GM10248 (cell line): ENCODE measurements at regions of chr13 and their contacts with region 1.

Region 1: GRCh38 chr13:99436686-99437416 is 64.4 kb upstream of the TM9SF2 start:
- DNase-seq: peak; percentile 83
- CTCF ChIP-seq: peak; percentile 100

Region 2: GRCh38 chr13:99288089-99288488 is 148.8 kb before region 1 on chr13:
- CTCF ChIA-PET with region 1: interaction called, 363 read pairs
- POLR2A ChIA-PET with region 1: no interaction called
- DNase-seq: peak; percentile 66
- CTCF ChIP-seq: no peak

Region 3: GRCh38 chr13:99347911-99348451 is 88.9 kb before region 1 on chr13:
- CTCF ChIA-PET with region 1: interaction called, 12 read pairs
- POLR2A ChIA-PET with region 1: no interaction called
- DNase-seq: no peak
- CTCF ChIP-seq: no peak

Region 4: DNA sequence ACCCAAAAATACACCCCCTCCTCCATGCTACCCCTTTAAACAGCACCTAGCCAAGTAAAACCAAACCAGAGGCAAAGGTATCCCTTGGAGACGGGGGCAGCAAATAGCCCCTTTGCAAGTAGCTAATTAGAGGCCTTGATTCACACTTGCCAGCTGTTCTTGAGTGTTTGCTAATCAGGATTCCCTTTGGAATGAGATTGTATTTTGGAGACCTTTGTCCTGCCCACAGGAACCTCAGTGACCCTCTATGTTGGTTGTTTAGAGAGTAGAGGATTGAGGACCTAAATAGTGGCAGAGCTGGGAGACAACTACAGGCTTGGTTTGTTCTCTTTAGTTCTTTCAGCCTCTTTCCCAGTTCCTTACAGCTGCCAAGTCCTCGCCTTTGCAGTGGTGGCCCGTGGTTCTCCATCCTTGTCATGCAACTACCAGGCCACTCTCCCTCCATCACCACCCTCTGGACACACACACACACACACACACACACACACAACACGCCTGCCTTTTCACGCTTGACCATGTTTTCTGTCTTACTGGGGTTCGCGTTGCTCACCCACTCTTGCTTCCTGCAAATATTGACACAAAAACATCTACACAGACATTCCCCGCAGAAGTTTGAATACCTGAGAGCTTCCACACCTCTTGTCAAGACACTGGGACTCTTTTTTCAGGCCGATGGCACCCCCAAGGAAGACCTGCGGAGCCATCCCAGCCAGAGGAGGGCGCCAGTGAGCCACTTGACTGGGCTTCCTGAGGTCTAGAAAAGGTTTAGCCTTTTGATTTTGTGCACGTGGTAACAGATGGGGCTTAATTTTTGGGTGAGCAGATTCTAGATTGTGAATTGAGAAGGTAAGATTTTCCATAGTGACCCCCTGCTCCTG is 49.7 kb before region 1 on chr13:
- CTCF ChIA-PET with region 1: interaction called, 450 read pairs
- POLR2A ChIA-PET with region 1: interaction called, 3 read pairs
- DNase-seq: peak; percentile 84
- CTCF ChIP-seq: peak; percentile 93

Region 5: DNA sequence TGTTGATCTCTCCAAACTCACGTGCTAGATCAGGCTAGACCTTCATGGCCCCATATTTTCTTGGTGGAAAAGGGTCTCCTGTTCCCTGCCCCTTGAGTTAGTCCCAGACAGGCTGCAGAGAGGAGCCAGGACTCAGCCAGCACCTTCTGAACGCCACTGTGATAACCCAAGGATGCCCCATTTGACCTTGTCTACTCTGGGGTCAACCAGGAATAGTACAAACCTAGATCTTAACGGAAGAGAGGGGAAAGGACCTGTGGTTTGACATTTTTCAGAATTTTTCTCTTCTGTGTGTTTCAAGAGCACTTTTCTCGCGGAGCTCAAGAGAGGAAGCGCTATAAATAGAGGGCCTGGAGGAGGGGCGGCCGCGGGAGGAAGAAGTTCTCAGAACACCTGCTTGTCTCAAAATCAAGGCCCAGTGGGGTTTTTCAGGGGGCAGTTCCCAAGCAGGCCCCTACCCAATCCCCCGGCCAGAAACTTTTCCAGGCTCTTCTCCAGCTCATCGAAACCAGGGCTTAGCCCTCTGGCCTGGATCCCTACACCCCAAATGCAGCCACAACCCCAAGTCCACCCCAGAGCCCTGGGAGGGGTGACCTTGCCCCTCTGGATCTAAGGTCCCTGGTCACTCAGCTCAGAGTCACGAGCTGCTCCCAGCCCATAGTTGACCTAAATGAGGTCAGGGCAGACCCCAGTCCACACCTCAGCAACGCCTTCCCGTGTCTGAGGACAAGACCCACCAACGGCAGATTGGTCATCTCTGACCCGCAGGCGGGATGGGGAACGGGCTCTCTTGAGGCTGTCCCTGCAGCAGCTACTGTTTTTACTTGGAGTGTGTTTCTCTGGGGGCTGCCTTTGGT is 11.1 kb before region 1 on chr13:
- CTCF ChIA-PET with region 1: interaction called, 155 read pairs
- POLR2A ChIA-PET with region 1: interaction called, 5 read pairs
- DNase-seq: peak; percentile 71
- CTCF ChIP-seq: no peak

Region 6: GRCh38 chr13:99969919-99970621 is 533.2 kb after region 1 on chr13:
- CTCF ChIA-PET with region 1: no interaction called
- POLR2A ChIA-PET with region 1: no interaction called
- DNase-seq: no peak
- CTCF ChIP-seq: no peak